ENCODE measurements at regions of chr4 and their contacts with region 1.

Region 1: GRCh38 chr4:38319456-38320342 is 344.3 kb upstream of the KLF3 start:
- DNase-seq: peak; percentile 95
- ATAC-seq: peak; percentile 68
- H3K4me3 Mint-ChIP-seq: peak overlapping the region; percentile 72
- H3K27ac Mint-ChIP-seq: peak overlapping the region; percentile 88
- H3K4me1 Mint-ChIP-seq: peaks cover 33% of the 10 kb centered on the region
- H3K27me3 Mint-ChIP-seq: no peaks in the 10 kb centered on the region

Region 2: DNA sequence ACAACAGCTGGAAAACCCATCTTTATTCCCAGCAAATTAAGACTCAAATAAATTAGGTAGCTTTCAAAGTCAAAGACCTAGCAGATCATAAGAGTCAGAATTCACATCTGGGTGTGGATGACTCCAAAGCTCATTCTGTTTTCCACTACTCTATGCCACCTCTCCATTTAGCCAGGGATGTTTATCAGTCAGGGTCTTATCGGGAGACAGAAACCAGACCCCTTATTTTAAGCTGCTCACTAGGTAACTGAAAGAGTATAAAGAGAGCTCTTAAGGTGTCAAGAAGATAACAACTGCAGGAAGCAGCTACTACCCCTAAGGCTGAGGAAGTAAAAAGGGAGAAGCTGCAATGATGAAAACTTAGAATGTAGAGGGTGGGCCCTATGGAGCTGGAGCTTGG is 10.6 kb after region 1 on chr4:
- CTCF ChIA-PET with region 1: interaction called, 14 read pairs
- POLR2A ChIA-PET with region 1: no interaction called
- DNase-seq: no peak
- ATAC-seq: no peak
- H3K4me3 Mint-ChIP-seq: no peak overlapping the region
- H3K27ac Mint-ChIP-seq: no peak overlapping the region
- H3K4me1 Mint-ChIP-seq: peaks cover 30% of the 10 kb centered on the region
- H3K27me3 Mint-ChIP-seq: no peaks in the 10 kb centered on the region

Region 3: GRCh38 chr4:38387348-38387747 is 67.6 kb after region 1 on chr4:
- CTCF ChIA-PET with region 1: no interaction called
- POLR2A ChIA-PET with region 1: no interaction called
- DNase-seq: no peak
- ATAC-seq: no peak
- H3K4me3 Mint-ChIP-seq: no peak overlapping the region
- H3K27ac Mint-ChIP-seq: no peak overlapping the region
- H3K4me1 Mint-ChIP-seq: no peaks in the 10 kb centered on the region
- H3K27me3 Mint-ChIP-seq: no peaks in the 10 kb centered on the region

Region 4: GRCh38 chr4:38654273-38654672 is 334.6 kb after region 1 on chr4:
- CTCF ChIA-PET with region 1: interaction called, 10 read pairs
- POLR2A ChIA-PET with region 1: no interaction called
- DNase-seq: no peak
- ATAC-seq: peak; percentile 58
- H3K4me3 Mint-ChIP-seq: no peak overlapping the region
- H3K27ac Mint-ChIP-seq: peak overlapping the region; percentile 73
- H3K4me1 Mint-ChIP-seq: peaks cover 32% of the 10 kb centered on the region
- H3K27me3 Mint-ChIP-seq: peaks cover 5% of the 10 kb centered on the region

Region 5: DNA sequence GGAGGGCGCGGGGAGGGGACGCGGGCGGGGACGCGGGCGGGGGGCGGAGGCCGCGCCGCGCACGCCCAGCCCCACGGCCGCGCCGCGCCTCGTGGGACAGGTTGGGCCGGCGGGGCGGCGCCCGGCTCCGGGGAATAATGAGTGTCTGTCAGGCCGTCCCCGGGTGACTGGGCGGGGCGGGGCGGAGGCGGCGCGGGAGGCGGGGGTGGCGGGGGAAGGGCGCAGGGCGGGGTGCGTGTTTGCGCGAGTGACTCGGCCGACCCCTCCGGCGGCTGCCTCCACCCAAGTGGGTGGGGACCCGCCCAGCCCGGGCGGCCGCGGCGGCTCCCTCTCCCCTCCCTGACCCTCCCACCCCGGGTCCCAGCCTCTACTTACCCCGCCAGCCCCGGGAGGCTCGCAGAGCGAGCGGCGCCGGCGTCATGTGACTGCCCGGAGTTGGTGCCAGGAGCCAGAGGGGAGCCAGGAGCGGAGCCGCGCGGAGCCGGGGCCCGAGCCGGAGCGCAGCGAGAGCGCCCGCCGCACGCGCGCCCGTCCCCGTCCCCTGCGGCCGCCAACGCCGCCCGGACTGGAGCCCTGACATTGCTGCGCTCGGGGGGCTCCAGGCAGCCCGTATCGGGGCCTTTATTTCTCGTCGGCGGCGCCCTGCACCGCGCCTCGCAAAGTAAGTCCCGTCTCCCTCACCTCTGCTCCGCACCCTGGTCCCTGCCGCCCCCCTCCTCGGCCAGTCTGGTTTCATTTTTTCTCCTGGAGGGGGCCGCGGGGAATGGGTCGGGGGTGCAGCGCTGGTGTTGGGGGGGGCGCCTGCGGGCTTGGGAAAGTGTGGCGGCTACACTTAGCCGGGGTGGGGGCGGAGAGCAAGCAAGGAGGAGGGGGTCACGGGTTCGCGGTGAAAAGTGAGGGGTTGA is 344.4 kb after region 1 on chr4 and contains the start of gene KLF3:
- CTCF ChIA-PET with region 1: interaction called, 47 read pairs
- POLR2A ChIA-PET with region 1: no interaction called
- DNase-seq: peak; percentile 90
- ATAC-seq: peak; percentile 88
- H3K4me3 Mint-ChIP-seq: peak within 1 kb of the TSS; percentile 78
- H3K27ac Mint-ChIP-seq: peak within 1 kb of the TSS; percentile 75
- H3K4me1 Mint-ChIP-seq: peaks cover 53% of the 10 kb centered on the region
- H3K27me3 Mint-ChIP-seq: peaks cover 5% of the 10 kb centered on the region
- total RNA-seq, gene KLF3: 8.1 to 8.3 TPM

Region 6: GRCh38 chr4:38675146-38676121 is 355.7 kb after region 1 on chr4:
- CTCF ChIA-PET with region 1: interaction called, 123 read pairs
- POLR2A ChIA-PET with region 1: interaction called, 5 read pairs
- DNase-seq: peak; percentile 90
- ATAC-seq: peak; percentile 77
- H3K4me3 Mint-ChIP-seq: no peak overlapping the region
- H3K27ac Mint-ChIP-seq: no peak overlapping the region
- H3K4me1 Mint-ChIP-seq: peaks cover 61% of the 10 kb centered on the region
- H3K27me3 Mint-ChIP-seq: no peaks in the 10 kb centered on the region

Region 7: DNA sequence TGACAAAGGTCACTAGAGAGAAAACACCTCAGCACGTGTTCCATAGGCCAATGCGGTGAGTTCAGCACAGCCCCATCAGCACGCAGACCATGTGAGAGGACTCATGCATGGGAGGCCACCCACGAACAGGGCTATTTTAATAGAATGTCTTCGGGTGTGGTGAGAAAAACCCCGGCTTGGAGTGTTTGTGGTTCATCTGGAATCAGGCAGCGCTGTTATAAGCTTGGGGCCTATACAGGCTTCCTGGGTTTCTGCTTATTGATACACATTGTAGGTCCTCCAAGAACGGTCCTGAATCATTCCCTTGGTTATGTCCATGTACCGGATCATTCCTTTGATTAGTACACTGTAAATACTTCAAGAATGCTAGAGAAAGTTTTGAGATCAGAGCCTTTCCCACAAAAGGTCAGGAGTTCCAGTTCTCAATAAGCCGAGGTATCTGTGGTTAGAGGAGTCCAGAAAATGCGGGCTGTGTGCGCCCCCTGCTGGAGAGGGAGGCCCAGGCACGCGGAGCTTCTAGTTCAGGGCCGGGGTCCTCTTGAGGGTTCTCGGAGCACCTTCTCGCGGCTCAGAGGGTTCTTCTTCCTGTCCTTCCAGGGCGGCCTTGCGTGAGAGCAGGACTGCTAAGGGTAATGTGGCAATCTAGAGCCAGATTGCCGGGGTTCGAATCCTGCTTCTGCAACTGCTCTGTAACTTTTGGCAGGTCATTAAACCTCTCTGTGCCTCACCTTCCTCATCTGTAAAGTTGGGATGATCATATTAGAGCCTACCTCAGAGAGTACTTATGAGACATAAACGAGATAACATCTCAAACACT is 411.3 kb after region 1 on chr4:
- CTCF ChIA-PET with region 1: interaction called, 35 read pairs
- POLR2A ChIA-PET with region 1: interaction called, 3 read pairs
- DNase-seq: peak; percentile 82
- ATAC-seq: peak; percentile 64
- H3K4me3 Mint-ChIP-seq: no peak overlapping the region
- H3K27ac Mint-ChIP-seq: no peak overlapping the region
- H3K4me1 Mint-ChIP-seq: peaks cover 13% of the 10 kb centered on the region
- H3K27me3 Mint-ChIP-seq: peaks cover 10% of the 10 kb centered on the region

Measured in activated CD8-positive, alpha-beta T cell treated with anti-CD3 and anti-CD28 coated beads, Interleukin-2, amount 10 ng/mL, durations not matched to agents 7 days and 5 days (primary cell).